Activated CD8-positive, alpha-beta T cell treated with anti-CD3 and anti-CD28 coated beads for 36 hours (primary cell): ENCODE measurements at regions of chr3 and their contacts with region 1.

Region 1: DNA sequence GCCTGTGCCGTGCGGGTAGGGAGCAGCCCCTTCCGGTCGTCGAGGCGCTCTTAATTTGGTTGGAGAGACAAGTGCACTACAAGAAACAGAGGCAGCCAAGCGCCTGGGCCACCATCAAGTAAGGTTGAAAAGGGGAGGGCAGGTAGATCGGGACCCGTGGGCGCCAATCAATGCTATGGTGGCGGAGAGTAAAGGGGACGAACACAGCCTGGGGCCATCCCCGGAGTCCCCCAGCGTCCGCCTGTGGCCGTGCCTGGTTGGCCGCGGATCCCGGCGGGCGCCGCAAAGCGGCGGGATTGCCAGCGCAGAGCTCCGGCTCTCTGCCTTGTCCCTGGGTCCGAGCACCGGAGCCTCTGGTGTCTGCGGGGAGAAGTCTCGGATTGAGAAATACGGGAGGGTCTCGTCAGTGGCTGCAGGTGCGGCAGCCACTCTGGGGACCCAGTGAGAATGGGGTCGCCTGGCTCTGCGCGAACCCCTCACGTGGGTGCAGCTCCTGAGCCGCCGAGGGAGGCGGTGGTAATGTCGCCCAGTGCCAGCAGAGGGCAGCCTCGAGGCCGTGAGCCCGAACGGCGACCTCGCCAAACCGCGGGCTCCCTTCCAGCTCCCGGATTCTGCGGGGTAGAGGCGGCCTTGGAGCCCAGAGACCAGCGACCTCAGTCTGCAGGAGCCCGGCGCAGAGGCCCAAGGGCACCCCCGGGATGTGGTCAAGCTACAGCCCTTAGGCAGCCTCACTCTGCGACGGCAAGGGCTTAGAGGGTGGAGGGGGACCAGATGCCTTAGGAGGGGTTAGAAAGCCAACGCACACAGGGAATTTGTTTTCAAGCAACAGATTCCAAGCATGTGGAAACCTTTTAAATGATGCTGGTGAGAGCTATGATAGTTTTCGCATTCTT is 10.8 kb downstream of the FOXL2 start:
- DNase-seq: peak; percentile 79
- ATAC-seq: peak; percentile 87
- H3K4me3 Mint-ChIP-seq: peak overlapping the region; percentile 67
- H3K27ac Mint-ChIP-seq: no peak overlapping the region
- H3K4me1 Mint-ChIP-seq: peaks cover 31% of the 10 kb centered on the region
- H3K27me3 Mint-ChIP-seq: peaks cover 71% of the 10 kb centered on the region
- CTCF ChIP-seq: peak; percentile 92

Region 2: GRCh38 chr3:138114988-138115971 is 820.8 kb before region 1 on chr3 and contains the start of gene DZIP1L:
- CTCF ChIA-PET with region 1: no interaction called
- POLR2A ChIA-PET with region 1: no interaction called
- intact Hi-C with region 1: no loop called
- DNase-seq: peak; percentile 44
- ATAC-seq: peak; percentile 91
- H3K4me3 Mint-ChIP-seq: peak within 1 kb of the TSS; percentile 71
- H3K27ac Mint-ChIP-seq: no peak within 1 kb of the TSS
- H3K4me1 Mint-ChIP-seq: peaks cover 4% of the 10 kb centered on the region
- H3K27me3 Mint-ChIP-seq: peaks cover 34% of the 10 kb centered on the region
- CTCF ChIP-seq: peak; percentile 76
- total RNA-seq, gene DZIP1L: not detected

Region 3: DNA sequence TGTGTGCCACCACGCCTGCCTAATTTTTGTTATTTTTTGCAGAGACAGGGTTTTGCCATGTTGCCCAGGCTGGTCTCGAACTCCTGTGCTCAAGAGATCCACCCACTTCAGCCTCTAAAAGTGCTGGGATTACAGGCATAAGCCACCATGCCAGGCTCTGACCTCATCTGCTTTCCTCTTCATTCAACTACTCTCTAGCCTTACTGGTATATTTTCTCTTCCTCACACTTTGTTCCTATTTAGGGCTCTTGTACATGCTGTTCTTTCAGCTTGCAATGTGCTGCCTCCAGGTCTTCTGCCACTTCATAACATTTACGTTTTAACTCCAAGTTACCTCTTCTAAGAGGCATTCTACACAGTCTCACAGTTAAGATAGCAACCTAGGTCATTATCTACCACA is 136.3 kb before region 1 on chr3:
- CTCF ChIA-PET with region 1: no interaction called
- POLR2A ChIA-PET with region 1: no interaction called
- intact Hi-C with region 1: no loop called
- DNase-seq: no peak
- ATAC-seq: no peak
- H3K4me3 Mint-ChIP-seq: no peak overlapping the region
- H3K27ac Mint-ChIP-seq: no peak overlapping the region
- H3K4me1 Mint-ChIP-seq: peaks cover 25% of the 10 kb centered on the region
- H3K27me3 Mint-ChIP-seq: no peaks in the 10 kb centered on the region
- CTCF ChIP-seq: no peak

Region 4: GRCh38 chr3:138946181-138947059 is 10.3 kb after region 1 on chr3:
- CTCF ChIA-PET with region 1: interaction called, 87 read pairs
- POLR2A ChIA-PET with region 1: interaction called, 4 read pairs
- intact Hi-C with region 1: no loop called
- DNase-seq: peak; percentile 51
- ATAC-seq: peak; percentile 14
- H3K4me3 Mint-ChIP-seq: peak overlapping the region; percentile 49
- H3K27ac Mint-ChIP-seq: no peak overlapping the region
- H3K4me1 Mint-ChIP-seq: peaks cover 30% of the 10 kb centered on the region
- H3K27me3 Mint-ChIP-seq: peaks cover 74% of the 10 kb centered on the region
- CTCF ChIP-seq: no peak

Region 5: GRCh38 chr3:138960417-138960852 is 24.3 kb after region 1 on chr3:
- CTCF ChIA-PET with region 1: interaction called, 12 read pairs
- POLR2A ChIA-PET with region 1: interaction called, 3 read pairs
- intact Hi-C with region 1: no loop called
- DNase-seq: no peak
- ATAC-seq: peak; percentile 27
- H3K4me3 Mint-ChIP-seq: peak overlapping the region; percentile 45
- H3K27ac Mint-ChIP-seq: no peak overlapping the region
- H3K4me1 Mint-ChIP-seq: peaks cover 9% of the 10 kb centered on the region
- H3K27me3 Mint-ChIP-seq: peaks cover 49% of the 10 kb centered on the region
- CTCF ChIP-seq: no peak

Region 6: DNA sequence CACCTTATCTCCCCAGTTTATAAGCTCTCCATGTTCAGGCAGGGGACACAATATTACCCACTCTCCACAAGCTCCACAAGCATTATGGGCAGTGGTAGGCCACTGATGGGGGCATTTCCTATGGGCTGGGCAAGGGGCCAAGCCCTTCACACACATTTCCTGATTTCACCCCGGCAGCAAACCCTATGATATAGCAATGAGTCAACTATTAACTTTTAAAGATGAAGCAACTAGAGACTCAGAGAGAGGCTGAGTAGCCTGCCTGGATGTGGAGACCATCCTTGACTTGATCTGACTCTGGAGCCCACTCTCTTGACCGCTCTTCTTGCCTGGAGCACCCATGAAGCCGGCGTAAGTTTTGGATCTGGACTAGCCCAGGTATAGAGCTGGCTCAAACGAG is 38.4 kb after region 1 on chr3:
- CTCF ChIA-PET with region 1: interaction called, 13 read pairs
- POLR2A ChIA-PET with region 1: no interaction called
- intact Hi-C with region 1: no loop called
- DNase-seq: no peak
- ATAC-seq: no peak
- H3K4me3 Mint-ChIP-seq: no peak overlapping the region
- H3K27ac Mint-ChIP-seq: no peak overlapping the region
- H3K4me1 Mint-ChIP-seq: no peaks in the 10 kb centered on the region
- H3K27me3 Mint-ChIP-seq: peaks cover 15% of the 10 kb centered on the region
- CTCF ChIP-seq: no peak